A673 (cell line): ENCODE measurements at regions of chr11 and their contacts with region 1.

Region 1: DNA sequence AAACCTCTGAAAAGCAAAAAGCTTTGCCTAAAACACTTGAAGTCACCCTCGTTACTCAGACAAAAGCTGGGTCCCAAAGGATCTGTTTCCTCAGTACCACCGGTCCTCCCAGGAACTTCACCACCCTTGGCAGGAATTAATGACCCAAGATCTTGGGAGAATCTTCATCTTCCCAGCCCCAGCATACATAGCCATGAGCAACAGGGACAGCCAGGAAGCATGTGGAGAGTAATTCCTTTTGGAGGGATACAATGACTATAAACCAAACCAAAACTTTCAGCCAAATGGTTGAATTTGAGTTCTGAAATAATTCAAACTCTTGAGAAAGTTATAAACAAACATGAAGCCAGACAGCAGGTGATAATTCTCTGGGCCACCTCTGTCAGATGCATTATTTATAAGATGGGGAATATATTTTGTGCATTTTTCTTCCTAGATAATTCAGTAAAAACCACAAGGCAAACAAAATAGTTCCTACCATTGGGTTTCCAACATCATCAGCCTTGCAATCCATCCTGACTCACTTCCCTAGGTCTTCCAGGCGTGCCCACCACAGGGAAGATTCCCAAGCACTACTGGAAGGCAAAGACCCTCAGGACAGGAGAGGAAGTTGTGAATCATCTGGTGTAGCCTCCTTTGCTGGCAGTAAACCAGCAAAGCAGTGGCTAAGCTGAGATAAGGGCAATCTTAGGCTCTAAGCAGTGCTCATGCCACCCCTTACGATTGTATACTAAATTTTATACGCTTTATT is 71.7 kb upstream of the DRD2 start:
- DNase-seq: no peak
- H3K4me3 ChIP-seq: no peak overlapping the region
- H3K27ac ChIP-seq: no peak overlapping the region
- H3K4me1 ChIP-seq: no peaks in the 10 kb centered on the region
- H3K27me3 ChIP-seq: peaks cover 11% of the 10 kb centered on the region
- CTCF ChIP-seq: no peak

Region 2: DNA sequence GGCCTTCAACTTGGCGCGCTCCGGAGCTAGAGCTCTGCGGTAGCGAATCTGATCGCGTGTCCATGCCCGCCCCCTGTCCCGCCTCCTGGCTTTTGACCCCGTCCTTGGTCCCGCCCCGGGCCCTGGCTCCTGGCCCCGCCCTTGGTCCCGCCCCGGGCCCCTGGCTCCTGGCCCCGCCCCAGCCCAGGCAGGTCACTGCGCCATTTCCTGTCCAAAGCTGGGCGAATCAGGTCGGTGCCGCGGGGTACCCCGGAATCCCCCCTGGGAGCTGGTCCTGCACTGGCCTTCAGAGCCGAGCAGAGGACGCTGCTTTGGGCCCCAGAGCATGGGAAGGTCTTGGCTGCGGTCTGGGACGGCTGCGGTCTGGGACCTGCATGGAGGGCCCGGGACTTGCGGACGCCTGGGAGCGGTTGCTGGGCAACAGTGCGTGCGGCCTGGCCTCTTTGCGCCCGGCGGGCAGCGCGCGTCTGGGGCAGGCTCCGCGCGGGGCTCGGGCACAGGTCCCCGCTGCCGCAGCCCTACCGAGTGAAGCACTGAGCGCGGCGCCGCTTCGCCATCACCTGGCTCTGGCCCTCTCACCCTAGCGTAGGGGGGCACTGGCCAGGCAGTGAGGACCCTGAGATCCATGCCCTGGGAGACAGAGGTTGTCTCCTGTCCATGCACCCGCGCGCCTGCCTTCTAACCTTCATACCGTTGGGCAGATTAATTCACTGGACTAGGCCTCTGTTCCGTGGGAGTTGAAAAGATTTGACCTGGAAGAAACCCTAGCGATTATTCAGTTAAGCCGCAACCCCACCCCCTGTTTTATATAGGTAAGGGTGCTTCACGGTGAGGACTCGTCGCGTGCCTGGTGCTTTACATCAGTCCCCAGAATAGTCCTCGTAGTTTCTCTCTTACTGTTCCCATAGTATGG is 232.3 kb before region 1 on chr11 and contains the start of gene TTC12:
- CTCF ChIA-PET with region 1: no interaction called
- POLR2A ChIA-PET with region 1: no interaction called
- intact Hi-C with region 1: loop called (anchors 5 kb)
- DNase-seq: no peak
- H3K4me3 ChIP-seq: no peak within 1 kb of the TSS
- H3K27ac ChIP-seq: no peak within 1 kb of the TSS
- H3K4me1 ChIP-seq: no peaks in the 10 kb centered on the region
- H3K27me3 ChIP-seq: no peaks in the 10 kb centered on the region
- CTCF ChIP-seq: no peak
- total RNA-seq, gene TTC12: not detected in 2 replicates

Region 3: GRCh38 chr11:114321621-114322257 is 774.8 kb after region 1 on chr11:
- CTCF ChIA-PET with region 1: no interaction called
- POLR2A ChIA-PET with region 1: no interaction called
- intact Hi-C with region 1: no loop called
- DNase-seq: no peak
- H3K4me3 ChIP-seq: no peak overlapping the region
- H3K27ac ChIP-seq: no peak overlapping the region
- H3K4me1 ChIP-seq: no peaks in the 10 kb centered on the region
- H3K27me3 ChIP-seq: peaks cover 31% of the 10 kb centered on the region
- CTCF ChIP-seq: no peak